GM23248 (cell line): ENCODE measurements at regions of chr11 and their contacts with region 1.

Region 1: GRCh38 chr11:129368889-129369672 is 6.6 kb upstream of the BARX2 start:
- DNase-seq: no peak
- H3K4me3 ChIP-seq: no peak overlapping the region
- H3K27ac ChIP-seq: no peak overlapping the region
- H3K4me1 ChIP-seq: 0 out of 2 replicates have a peak, but pooled peaks cover 4% of the 10 kb centered on the region
- H3K27me3 ChIP-seq: peaks cover 97% of the 10 kb centered on the region

Region 2: GRCh38 chr11:128790196-128790595 is 578.9 kb before region 1 on chr11:
- in situ Hi-C with region 1: no loop called
- DNase-seq: peak; percentile 48
- H3K4me3 ChIP-seq: 0 out of 2 replicates have a peak overlapping the region, but pooled peaks have one; percentile 11
- H3K27ac ChIP-seq: 0 out of 2 replicates have a peak overlapping the region, but pooled peaks have one; percentile 15
- H3K4me1 ChIP-seq: peaks cover 9% of the 10 kb centered on the region
- H3K27me3 ChIP-seq: no peaks in the 10 kb centered on the region

Region 3: GRCh38 chr11:129090056-129090455 is 279.0 kb before region 1 on chr11:
- in situ Hi-C with region 1: no loop called
- DNase-seq: peak; percentile 26
- H3K4me3 ChIP-seq: no peak overlapping the region
- H3K27ac ChIP-seq: no peak overlapping the region
- H3K4me1 ChIP-seq: peaks cover 8% of the 10 kb centered on the region
- H3K27me3 ChIP-seq: no peaks in the 10 kb centered on the region

Region 4: DNA sequence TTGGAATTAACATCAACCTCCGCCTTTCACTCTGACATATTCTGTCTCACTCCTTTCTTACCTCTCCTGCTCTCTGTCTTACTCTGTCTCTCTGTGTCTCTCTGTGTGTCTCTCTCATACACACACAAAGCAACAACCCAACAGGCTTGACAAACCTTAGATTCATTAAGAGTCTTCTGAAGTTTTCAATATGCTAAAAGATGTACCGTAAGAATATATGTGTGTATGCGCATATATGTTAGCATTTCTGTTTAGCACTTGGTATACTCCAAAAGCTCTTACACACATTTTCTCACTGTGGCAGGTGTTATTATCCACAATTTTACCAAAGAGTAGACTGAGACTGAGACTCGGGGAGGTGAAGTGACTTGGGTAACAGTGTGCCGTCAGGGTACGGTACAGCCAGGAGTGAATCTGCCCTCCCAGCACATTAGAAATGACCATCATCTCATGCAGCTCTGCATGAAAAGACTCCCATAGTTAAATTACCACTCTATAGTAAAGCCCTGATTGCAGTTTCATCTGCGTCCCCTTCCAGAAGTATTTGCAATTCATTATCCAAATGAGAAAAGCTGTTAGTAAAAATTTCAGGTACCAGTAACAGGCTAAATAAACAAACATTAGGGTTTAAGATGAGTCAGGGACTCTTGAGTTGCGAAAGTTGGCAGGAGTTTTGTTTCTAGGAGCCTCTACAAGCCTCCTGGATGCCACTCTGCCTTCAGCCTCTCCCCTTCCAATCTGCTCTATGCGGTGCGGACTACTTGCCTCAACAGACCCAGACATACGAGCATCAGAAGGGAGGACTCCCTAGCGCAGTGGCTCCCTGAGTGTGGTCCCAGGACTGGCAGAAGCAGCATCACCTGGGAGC is 251.4 kb after region 1 on chr11:
- in situ Hi-C with region 1: no loop called
- DNase-seq: peak; percentile 42
- H3K4me3 ChIP-seq: no peak overlapping the region
- H3K27ac ChIP-seq: no peak overlapping the region
- H3K4me1 ChIP-seq: no peaks in the 10 kb centered on the region
- H3K27me3 ChIP-seq: peaks cover 81% of the 10 kb centered on the region

Region 5: DNA sequence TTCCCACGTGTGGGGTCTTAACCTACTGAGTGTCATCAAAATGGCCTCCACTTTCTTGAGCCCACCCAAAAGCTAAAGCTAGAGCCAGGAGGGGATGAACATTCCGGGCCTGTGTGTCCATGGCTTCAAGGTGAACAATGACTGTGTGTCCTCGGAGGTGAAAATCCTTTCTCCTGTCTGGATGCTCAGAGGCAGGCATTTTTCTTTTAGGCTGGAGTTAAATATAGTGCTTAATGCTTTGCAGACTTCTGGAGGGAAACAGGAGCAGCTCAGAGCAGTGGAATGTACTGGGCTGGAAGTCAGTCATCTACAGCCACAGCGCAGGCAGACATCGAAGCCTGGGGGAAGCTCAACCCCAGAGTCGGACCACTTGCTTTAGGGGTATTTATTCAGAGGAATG is 378.0 kb after region 1 on chr11:
- in situ Hi-C with region 1: loop called (anchors 5 kb)
- DNase-seq: peak; percentile 29
- H3K4me3 ChIP-seq: no peak overlapping the region
- H3K27ac ChIP-seq: no peak overlapping the region
- H3K4me1 ChIP-seq: no peaks in the 10 kb centered on the region
- H3K27me3 ChIP-seq: peaks cover 73% of the 10 kb centered on the region